ENCODE measurements at regions of chr3 and their contacts with region 1.

Region 1: DNA sequence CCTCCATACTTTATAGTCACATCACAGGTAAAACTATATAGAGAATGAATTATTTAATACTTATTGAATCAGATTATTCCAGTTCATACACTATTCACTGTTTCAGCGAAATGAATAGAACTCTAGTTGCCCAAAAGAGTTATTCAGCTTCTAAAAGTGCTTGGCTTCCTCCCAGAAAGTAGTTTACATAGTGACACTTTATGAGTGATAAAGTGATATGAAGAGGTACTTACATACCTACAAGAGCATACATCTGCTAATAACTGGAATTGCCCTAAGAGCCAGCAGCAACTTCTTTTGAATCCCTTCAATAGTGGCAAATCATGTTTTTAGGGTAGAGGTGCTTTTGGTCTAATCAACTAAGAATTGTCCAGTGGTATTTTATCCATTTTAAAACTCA is 635.1 kb upstream of the AGTR1 start:
- DNase-seq: no peak
- ATAC-seq: no peak

Region 2: DNA sequence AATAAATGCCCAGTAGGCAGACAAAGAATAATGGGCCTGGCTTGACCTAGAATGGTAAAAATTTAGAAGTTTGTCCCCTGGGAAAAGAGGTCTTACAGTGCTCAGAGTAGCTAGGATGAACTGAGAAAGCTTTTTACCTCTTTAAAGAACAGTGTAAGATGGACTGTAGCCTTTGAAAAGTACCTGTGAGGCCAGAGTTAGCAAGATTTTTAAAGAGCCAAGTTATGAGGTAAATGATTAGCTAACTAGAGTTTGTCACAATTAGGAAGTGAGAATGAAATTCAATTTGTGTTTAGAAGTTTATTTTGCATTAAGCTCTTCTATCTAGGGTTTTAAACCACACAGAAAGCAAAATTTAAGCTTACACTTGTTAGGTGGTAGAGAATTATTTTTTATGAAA is 172.5 kb before region 1 on chr3:
- intact Hi-C with region 1: no loop called
- DNase-seq: no peak
- ATAC-seq: peak; percentile 86

Region 3: DNA sequence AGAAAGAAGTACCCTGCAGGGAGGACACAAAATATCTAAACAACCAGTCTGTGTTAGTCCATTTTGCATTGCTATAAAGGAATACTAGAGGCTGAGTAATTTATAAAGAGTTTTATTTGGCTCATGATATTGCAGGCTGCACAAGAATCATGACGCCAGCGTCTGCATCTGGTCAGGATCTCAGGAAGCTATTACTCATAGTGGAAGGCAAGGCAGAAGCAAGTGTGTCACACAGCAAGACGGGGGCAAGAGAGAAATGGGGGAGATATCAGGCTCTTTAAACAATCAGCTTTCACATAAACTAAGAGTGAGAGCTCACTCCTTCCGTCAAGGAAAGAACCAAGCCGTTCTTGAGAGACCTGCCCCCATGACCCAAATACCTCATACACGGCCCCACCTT is 38.6 kb before region 1 on chr3:
- intact Hi-C with region 1: loop called in 1 of 2 experiments (anchors 2 kb)
- DNase-seq: peak in 1 of 2 donors; percentile 30
- ATAC-seq: no peak

Measured in left colon (tissue), 2 donors.